Vagina (tissue), 2 donors: ENCODE measurements at regions of chrX and their contacts with region 1.

Region 1: DNA sequence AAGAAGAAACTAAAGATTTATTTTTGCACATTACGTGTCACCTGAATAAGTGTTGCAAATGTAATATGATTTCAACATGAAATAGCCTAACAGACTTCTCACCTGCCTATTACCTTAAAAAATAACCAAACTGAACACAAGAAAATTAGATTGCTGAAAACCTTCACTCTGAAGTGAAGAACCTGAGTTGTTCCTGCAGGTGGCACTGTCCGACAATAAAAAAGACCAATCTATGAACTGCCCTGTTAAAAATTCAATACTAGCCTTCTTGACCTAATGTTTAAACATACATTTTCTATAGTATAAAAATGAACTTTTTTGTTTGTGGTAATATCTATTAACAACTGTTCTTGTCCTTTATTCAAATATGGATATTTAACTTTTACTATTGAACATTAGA is 69.2 kb upstream of the PNPLA4 start:
- DNase-seq: no peak
- H3K4me3 ChIP-seq: no peak overlapping the region
- H3K27ac ChIP-seq: no peak overlapping the region
- H3K4me1 ChIP-seq: no peaks in the 10 kb centered on the region
- H3K27me3 ChIP-seq: no peaks in the 10 kb centered on the region
- CTCF ChIP-seq: peak; percentile 26 to 53 (median 35)
- POLR2A ChIP-seq: no peak

Region 2: DNA sequence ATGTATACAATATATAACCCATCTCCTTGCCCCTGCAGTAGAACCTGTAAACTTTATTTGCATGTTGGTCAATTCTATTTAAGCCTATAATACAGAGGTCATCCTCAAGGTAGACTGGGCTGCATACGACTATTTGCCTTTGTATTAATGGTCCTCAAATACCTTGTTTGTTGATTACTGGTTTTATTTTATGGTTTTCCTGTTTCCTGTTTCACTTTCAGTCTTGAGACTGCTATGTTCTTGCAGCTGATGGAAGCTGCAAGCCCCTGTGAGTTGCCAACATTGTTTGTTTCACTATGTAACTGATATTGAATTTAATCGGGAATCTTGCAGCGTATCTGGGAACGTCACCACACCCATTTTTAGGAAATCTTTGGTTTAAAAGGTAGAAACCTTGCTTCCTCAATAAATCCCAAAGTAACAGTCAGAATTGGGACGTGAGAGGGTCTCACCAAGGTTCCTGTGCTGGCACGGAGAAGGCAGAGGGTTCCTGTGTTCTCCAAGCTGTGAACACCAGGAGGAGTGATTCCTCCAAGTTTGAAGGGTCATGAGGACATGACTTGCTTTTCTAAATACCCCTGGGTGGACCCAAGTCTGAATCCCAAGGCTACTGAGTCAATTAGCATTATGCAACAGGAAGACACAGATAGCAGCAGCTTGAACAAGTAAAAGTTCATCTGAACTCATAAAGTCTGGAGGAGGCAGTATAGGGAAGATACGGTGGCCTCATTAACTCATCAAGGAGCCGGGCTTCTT is 41.4 kb after region 1 on chrX:
- intact Hi-C with region 1: no loop called
- DNase-seq: no peak
- H3K4me3 ChIP-seq: no peak overlapping the region
- H3K27ac ChIP-seq: no peak overlapping the region
- H3K4me1 ChIP-seq: no peaks in the 10 kb centered on the region
- H3K27me3 ChIP-seq: no peaks in the 10 kb centered on the region
- CTCF ChIP-seq: no peak
- POLR2A ChIP-seq: no peak

Region 3: GRCh38 chrX:8075636-8076035 is 79.2 kb after region 1 on chrX:
- intact Hi-C with region 1: no loop called
- DNase-seq: no peak
- H3K4me3 ChIP-seq: no peak overlapping the region
- H3K27ac ChIP-seq: no peak overlapping the region
- H3K4me1 ChIP-seq: no peaks in the 10 kb centered on the region
- H3K27me3 ChIP-seq: no peaks in the 10 kb centered on the region
- CTCF ChIP-seq: no peak
- POLR2A ChIP-seq: no peak

Region 4: DNA sequence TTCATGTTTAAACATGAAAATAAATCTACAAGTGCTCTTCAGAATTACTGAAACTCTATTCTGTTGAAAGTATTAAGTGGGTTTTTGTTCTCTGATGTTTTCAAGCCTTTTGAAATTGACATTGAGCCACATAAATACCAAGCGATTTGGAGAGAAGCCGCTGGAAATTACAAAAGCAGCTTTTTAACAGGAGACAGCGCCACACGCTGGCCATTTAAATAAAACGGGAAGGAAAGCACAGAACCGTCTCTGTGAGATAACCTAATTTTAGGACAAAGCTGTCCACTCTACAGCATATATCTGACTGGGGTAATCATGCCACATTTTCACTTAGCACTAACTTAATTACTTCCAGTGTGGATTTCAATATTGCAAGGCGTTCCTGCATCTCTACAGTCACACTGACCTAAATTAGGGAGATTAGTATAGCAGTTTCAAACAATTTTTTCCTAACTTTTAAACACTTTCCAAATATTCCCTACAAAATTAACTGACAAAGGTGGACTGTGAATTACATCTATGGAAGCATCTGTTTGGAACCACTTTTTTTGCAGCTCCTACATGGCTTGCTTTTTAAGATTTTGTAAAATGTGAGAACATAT is 742.3 kb after region 1 on chrX:
- intact Hi-C with region 1: loop called (anchors 10 kb)
- DNase-seq: no peak
- H3K4me3 ChIP-seq: no peak overlapping the region
- H3K27ac ChIP-seq: no peak overlapping the region
- H3K4me1 ChIP-seq: no peaks in the 10 kb centered on the region
- H3K27me3 ChIP-seq: no peaks in the 10 kb centered on the region
- CTCF ChIP-seq: peak in 2 of 3 experiments; percentile 39 to 50
- POLR2A ChIP-seq: no peak